Adrenal gland (tissue), 19 donors: ENCODE measurements at regions of chr2 and their contacts with region 1.

Region 1: DNA sequence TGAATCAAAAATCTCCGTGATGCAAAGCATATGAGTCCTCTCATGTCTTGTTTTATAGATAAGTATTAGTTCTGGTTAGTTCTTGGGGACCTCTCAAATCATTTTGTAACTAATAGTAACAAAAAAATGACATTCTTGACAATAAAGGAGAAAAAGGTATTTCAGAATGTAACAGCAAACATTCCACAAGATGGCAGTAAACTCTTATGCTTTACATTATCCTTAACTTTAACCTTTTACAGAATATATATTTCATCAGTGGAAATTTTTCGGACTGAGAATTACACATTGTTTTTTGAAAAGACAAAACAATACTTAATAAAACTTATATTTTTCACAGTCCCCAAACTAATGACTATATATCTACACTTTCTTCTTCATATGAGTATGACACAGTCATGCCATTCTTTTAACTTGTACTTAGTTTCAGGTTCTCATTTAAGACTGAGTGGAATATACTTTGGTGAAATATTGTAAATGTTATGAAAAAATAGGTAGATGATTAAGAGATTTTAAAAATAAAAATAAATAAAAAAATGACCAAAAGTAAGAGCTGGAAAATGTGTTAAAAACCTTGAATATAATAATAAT is 142.9 kb upstream of the NXPH2 start:
- DNase-seq: no peak
- H3K4me3 ChIP-seq: no peak overlapping the region
- H3K27ac ChIP-seq: no peak overlapping the region
- H3K4me1 ChIP-seq: no peaks in the 10 kb centered on the region
- H3K27me3 ChIP-seq: no peaks in the 10 kb centered on the region
- CTCF ChIP-seq: peak in 4 of 6 experiments; percentile 13 to 46 (median 18)
- POLR2A ChIP-seq: no peak

Region 2: GRCh38 chr2:138779781-138780445 is 143.2 kb before region 1 on chr2 and contains the start of gene NXPH2:
- intact Hi-C with region 1: no loop called
- DNase-seq: no peak
- H3K4me3 ChIP-seq: peak within 1 kb of the TSS in 1 of 4 donors; percentile 23
- H3K27ac ChIP-seq: no peak within 1 kb of the TSS
- H3K4me1 ChIP-seq: peaks cover 0 to 6% of the 10 kb centered on the region in 2 donors
- H3K27me3 ChIP-seq: peaks cover 53% of the 10 kb centered on the region
- CTCF ChIP-seq: no peak
- POLR2A ChIP-seq: no peak
- total RNA-seq, gene NXPH2: 0.11 TPM in 1 of 9 donors, not detected in the others

Region 3: GRCh38 chr2:139946693-139947092 is 1023.6 kb after region 1 on chr2:
- intact Hi-C with region 1: loop called in 1 of 2 experiments (anchors 10 kb)
- DNase-seq: no peak
- H3K4me3 ChIP-seq: no peak overlapping the region
- H3K27ac ChIP-seq: no peak overlapping the region
- H3K4me1 ChIP-seq: no peaks in the 10 kb centered on the region
- H3K27me3 ChIP-seq: no peaks in the 10 kb centered on the region
- CTCF ChIP-seq: no peak
- POLR2A ChIP-seq: no peak